Mammary epithelial cell (primary cell): ENCODE measurements at regions of chr4 and their contacts with region 1.

Region 1: GRCh38 chr4:148152871-148153625 is 289.2 kb downstream of the NR3C2 start:
- DNase-seq: no peak
- H3K4me3 ChIP-seq: no peak overlapping the region
- H3K27ac ChIP-seq: no peak overlapping the region
- H3K4me1 ChIP-seq: no peaks in the 10 kb centered on the region
- H3K27me3 ChIP-seq: peaks cover 2% of the 10 kb centered on the region
- CTCF ChIP-seq: peak in 1 of 2 donors; percentile 21

Region 2: GRCh38 chr4:147924604-147925412 is 228.2 kb before region 1 on chr4:
- CTCF ChIA-PET with region 1: no interaction called
- dilution Hi-C with region 1: no loop called
- in situ Hi-C with region 1: no loop called
- intact Hi-C with region 1: loop called (anchors 2 kb)
- DNase-seq: no peak
- H3K4me3 ChIP-seq: no peak overlapping the region
- H3K27ac ChIP-seq: no peak overlapping the region
- H3K4me1 ChIP-seq: no peaks in the 10 kb centered on the region
- H3K27me3 ChIP-seq: no peaks in the 10 kb centered on the region
- CTCF ChIP-seq: peak; percentile 21 to 45